Activated T-helper 1 cell treated with anti-CD3 and anti-CD28 coated beads, Interleukin-12 subunit alpha, Interleukin-12 subunit beta, Interleukin-2, Interleukin-4 antibody, amounts not matched to agents 30 ng/mL and 10 ng/mL and 1 ng/mL, durations not matched to agents 14 hours and 24 hours and 36 hours (primary cell): ENCODE measurements at regions of chr7 and their contacts with region 1.

Region 1: DNA sequence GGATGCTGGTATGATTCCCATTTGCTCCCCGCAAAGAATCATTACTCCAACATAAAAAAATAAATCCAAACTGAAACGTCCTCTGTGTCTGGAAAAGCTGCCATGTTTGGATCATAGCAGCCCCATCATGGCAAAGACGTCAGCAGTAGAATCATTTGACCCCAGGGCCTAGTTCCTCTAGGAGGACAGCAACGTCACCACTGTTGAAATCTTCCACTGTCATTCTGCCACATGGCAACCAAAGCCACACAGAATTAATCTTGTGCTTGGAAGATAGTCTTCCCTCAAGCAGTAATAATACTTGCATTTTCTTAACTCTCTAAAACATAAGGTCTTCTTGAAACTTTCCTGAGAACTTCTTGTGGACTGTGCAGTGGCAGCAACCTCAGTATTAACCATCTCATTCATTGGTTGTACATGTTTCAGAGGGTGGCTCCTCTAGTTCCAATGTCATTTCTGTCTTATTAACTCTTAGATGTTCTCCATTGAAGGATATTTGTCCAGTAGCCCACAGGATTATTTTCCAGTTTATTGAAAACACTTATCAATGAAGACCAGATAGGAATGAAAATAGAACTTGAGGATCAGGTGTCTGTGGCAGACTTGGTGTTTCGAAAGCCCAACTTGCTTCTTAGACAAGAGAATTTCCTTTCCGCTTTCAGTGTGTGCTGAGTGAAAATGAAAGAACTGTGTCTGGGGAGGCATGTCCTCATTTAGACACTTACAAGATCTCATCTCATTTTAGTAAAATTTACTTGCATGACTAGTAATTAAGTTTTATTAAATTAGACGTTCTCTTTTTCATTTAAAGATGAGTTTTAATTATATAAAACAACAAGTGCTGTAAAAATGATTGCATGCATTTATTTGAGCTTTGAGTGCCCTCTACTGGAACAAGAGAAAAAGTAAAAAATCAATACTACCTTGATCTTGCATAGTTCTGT is 28.9 kb upstream of the INHBA start:
- DNase-seq: no peak
- H3K4me3 Mint-ChIP-seq: no peak overlapping the region
- H3K27ac Mint-ChIP-seq: peak overlapping the region; percentile 1
- H3K4me1 Mint-ChIP-seq: peaks cover 21% of the 10 kb centered on the region
- H3K27me3 Mint-ChIP-seq: peaks cover 4% of the 10 kb centered on the region

Region 2: DNA sequence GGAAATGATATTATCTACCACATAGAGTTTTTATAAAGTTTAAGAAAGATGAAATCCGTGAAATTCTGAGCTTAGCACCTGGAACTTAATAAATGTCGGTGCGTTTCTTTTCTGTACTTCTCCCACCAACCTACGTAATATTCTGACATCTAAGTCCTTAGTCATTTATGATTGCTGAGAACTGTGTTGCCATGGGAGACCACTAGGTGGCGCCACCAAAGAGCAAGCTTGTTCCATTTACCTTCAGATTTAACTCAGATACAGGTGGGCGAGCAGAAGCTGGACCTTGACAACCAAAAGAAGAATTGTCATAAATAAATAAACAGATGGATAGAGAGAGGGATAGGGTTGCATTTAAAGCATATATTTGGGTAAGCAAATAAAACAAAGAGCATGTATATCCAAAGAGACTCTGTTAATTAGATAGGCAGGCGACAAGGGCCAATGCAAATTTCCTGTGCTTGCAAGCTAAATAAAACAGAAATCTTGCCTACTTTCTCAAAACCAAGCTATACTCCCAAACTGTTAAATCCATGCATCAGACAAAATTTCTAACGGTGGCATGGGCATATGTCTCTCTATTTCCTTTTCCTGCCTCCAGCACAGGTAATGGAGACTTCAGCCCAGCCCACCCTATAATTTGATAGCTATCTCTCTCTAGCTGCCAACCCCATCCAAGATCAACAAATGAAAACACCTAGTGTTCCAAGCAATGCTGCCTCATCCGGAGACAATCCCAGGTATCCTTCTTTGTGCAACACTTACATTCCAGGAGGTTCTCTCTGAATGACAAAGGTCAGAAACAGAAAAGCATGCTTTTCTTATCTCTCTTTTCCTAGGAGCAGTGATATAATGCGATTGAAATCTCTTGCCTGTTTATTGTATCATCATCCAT is 728.5 kb before region 1 on chr7:
- intact Hi-C with region 1: loop called (anchors 10 kb)
- DNase-seq: peak; percentile 2
- H3K4me3 Mint-ChIP-seq: no peak overlapping the region
- H3K27ac Mint-ChIP-seq: no peak overlapping the region
- H3K4me1 Mint-ChIP-seq: no peaks in the 10 kb centered on the region
- H3K27me3 Mint-ChIP-seq: no peaks in the 10 kb centered on the region

Region 3: DNA sequence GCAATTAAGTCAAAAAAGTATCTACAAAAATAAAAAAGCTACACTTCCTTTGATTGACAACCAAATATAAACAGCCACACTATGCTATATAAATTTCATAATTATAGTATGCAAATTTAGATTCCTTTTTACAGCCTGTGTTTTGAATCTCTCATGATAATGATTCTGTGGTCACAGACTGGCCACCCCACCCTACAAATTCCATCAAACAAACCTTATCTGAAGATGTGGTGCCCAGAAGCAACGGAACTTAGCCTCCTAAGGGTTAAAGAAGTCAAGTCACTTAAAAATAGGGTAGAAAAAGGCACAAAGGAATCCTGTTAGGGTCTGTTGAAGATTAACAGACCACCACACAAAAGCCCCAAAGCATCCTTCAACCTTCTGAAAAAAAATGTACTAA is 380.7 kb before region 1 on chr7:
- intact Hi-C with region 1: no loop called
- DNase-seq: no peak
- H3K4me3 Mint-ChIP-seq: no peak overlapping the region
- H3K27ac Mint-ChIP-seq: no peak overlapping the region
- H3K4me1 Mint-ChIP-seq: no peaks in the 10 kb centered on the region
- H3K27me3 Mint-ChIP-seq: no peaks in the 10 kb centered on the region

Region 4: GRCh38 chr7:41817386-41817785 is 85.6 kb after region 1 on chr7:
- intact Hi-C with region 1: loop called (anchors 2 kb)
- DNase-seq: peak; percentile 25
- H3K4me3 Mint-ChIP-seq: no peak overlapping the region
- H3K27ac Mint-ChIP-seq: peak overlapping the region; percentile 56
- H3K4me1 Mint-ChIP-seq: peaks cover 49% of the 10 kb centered on the region
- H3K27me3 Mint-ChIP-seq: peaks cover 1% of the 10 kb centered on the region